ENCODE measurements at regions of chr15 and their contacts with region 1.

Region 1: GRCh38 chr15:68875377-68876116 is 54.8 kb upstream of the SPESP1 start:
- DNase-seq: peak; percentile 93
- H3K4me3 ChIP-seq: peak overlapping the region; percentile 41
- H3K27ac ChIP-seq: no peak overlapping the region
- H3K4me1 ChIP-seq: peaks cover 3% of the 10 kb centered on the region
- H3K27me3 ChIP-seq: no peaks in the 10 kb centered on the region
- CTCF ChIP-seq: peak; percentile 86

Region 2: DNA sequence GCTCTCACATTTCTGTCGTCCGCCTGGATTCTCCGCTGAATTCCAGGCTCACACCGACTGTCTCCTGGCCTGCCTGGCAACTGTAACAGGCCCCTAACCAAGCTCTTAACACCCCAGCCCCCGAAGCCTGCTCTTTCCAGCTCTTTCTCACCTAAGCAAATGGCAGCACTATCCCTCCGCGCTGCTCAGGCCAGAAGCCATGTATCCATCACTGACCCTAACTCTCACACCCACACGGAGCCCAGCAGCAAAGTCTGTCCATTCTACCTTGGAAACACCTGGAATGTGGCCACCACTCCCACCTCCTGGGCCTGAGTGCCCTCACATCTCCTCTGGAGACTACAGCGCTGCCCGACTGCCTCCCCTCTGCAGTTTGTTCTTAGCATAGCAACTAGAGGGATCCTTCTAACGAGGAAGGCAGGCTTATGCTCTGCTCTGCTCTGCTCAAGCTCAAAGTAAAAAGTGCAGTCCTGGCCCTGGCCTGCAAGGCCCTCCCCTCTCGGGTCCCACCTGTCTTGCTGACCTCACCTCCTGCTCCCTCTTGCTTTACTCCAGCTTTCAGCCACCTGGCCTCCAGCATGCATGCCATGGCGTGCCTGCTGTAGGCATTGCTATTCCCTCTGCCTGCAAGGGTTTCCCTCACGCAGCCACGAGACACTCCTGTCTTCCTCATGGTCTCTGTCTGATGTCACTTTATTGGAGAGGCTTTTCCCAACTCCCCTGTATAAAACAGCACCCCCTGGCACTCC is 570.8 kb before region 1 on chr15:
- CTCF ChIA-PET with region 1: interaction called, 6 read pairs
- POLR2A ChIA-PET with region 1: no interaction called
- intact Hi-C with region 1: loop called (anchors 5 kb)
- DNase-seq: no peak
- H3K4me3 ChIP-seq: no peak overlapping the region
- H3K27ac ChIP-seq: no peak overlapping the region
- H3K4me1 ChIP-seq: no peaks in the 10 kb centered on the region
- H3K27me3 ChIP-seq: no peaks in the 10 kb centered on the region
- CTCF ChIP-seq: no peak

Region 3: DNA sequence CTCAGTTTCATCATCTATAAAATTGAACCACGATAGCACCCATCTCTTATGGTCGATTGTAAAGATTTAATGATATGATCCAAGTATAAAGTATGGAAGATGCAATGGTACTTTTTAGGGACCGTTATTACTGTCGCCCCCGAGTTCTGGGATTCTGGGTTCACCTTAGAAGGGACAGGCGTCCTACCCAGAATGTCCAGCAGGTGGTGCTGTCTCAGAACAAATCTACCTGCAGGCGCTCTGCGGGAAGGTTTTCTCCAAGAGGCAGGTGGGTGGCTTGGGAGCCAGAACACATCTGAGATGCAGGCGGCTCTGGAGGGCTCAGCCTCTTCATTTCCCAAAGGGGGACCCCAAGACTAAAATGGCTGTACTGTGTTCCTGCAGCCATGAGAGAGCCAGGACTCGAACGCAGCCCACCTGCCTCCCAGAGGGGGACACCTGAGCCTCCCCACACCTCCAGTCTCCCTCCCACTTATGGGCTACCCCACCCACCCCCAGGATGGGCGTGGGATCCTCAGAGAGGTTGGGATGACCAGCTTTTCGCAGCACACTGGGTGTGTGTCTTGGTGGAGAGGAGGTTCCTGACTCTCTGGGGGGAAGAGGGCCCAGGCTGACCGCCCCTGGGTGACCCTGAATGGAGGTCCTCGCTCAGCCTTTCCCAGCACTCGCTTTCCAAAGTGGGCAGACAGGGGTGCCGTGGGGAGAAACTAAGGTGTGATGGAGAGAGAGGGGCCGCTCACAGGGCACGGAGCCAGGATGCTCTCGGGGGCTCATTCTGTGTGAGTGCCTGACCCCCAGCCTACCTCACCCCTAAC is 324.9 kb before region 1 on chr15:
- CTCF ChIA-PET with region 1: interaction called, 18 read pairs
- POLR2A ChIA-PET with region 1: no interaction called
- intact Hi-C with region 1: loop called (anchors 2 kb)
- DNase-seq: peak; percentile 62
- H3K4me3 ChIP-seq: no peak overlapping the region
- H3K27ac ChIP-seq: no peak overlapping the region
- H3K4me1 ChIP-seq: no peaks in the 10 kb centered on the region
- H3K27me3 ChIP-seq: peaks cover 4% of the 10 kb centered on the region
- CTCF ChIP-seq: peak; percentile 95

Region 4: GRCh38 chr15:68700455-68701123 is 175.0 kb before region 1 on chr15:
- CTCF ChIA-PET with region 1: interaction called, 10 read pairs
- POLR2A ChIA-PET with region 1: no interaction called
- intact Hi-C with region 1: no loop called
- DNase-seq: peak; percentile 87
- H3K4me3 ChIP-seq: peak overlapping the region; percentile 6
- H3K27ac ChIP-seq: peak overlapping the region; percentile 69
- H3K4me1 ChIP-seq: peaks cover 18% of the 10 kb centered on the region
- H3K27me3 ChIP-seq: no peaks in the 10 kb centered on the region
- CTCF ChIP-seq: no peak

Region 5: DNA sequence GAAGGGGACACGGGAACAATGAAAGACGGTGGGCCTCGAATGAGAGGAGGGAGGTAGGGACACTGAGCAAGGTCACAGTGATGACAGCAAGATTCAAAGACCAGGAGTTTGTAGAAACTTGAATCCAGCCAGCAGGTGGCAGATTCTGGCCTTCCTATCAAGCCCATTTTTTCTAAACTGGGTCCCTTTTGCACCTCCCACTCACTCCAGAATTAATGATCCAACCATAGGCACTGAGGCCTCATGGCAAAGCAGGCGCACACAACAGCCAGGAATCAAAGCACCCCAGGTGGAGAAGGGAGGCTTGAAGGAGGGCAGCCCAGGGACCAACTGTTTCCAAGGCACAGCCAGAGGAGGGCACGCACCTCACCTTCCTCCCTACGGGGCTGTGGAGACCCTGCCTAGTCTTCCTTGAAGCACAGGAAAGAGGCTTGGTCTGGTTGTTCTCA is 145.1 kb before region 1 on chr15:
- CTCF ChIA-PET with region 1: interaction called, 10 read pairs
- POLR2A ChIA-PET with region 1: no interaction called
- intact Hi-C with region 1: loop called (anchors 1 kb)
- DNase-seq: peak; percentile 78
- H3K4me3 ChIP-seq: no peak overlapping the region
- H3K27ac ChIP-seq: no peak overlapping the region
- H3K4me1 ChIP-seq: peaks cover 9% of the 10 kb centered on the region
- H3K27me3 ChIP-seq: no peaks in the 10 kb centered on the region
- CTCF ChIP-seq: peak; percentile 67

Region 6: DNA sequence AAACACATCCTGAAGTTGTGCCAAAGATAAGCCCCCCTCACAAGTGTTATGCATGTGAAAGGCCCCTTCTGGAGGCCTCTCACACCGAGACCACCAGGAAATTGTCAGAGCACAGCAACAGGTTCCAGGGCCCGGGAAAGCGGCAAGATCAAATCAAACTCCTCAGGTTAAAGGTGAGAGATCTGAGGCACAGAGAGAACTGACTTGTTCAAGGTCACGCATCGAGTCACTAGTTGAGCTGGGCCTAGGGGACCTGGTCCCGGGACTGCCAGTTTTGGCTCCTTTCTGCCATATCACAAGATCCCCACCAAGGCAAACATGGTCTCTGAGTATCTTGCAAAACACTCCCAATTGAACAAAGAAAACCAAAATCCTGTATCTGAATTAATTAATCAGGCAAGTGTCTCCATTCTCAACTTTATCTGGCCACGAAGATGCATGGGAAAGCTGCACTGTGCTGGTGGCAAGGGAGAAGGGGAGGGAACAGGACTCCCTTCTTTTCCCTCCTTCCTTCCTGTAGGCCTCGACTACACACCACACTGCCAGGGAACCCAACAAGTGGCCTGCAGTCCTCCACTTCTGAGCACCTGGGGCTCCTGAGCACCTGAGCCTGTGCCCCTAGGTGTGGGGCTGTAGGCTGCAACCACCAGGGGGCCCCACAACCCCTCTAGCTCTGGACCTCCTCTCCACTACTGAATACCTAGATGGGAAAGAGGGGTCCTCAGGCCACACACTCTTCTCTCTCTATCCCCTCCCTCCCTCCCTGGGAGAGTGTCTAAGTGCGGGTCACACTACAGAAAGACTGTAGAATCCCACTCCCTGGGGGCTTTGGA is 92.1 kb before region 1 on chr15:
- CTCF ChIA-PET with region 1: interaction called, 13 read pairs
- POLR2A ChIA-PET with region 1: no interaction called
- intact Hi-C with region 1: loop called (anchors 2 kb)
- DNase-seq: peak; percentile 27
- H3K4me3 ChIP-seq: no peak overlapping the region
- H3K27ac ChIP-seq: peak overlapping the region; percentile 45
- H3K4me1 ChIP-seq: peaks cover 10% of the 10 kb centered on the region
- H3K27me3 ChIP-seq: no peaks in the 10 kb centered on the region
- CTCF ChIP-seq: peak; percentile 67

Region 7: GRCh38 chr15:68924866-68925560 is 49.5 kb after region 1 on chr15:
- CTCF ChIA-PET with region 1: interaction called, 10 read pairs
- POLR2A ChIA-PET with region 1: no interaction called
- intact Hi-C with region 1: no loop called
- DNase-seq: peak; percentile 90
- H3K4me3 ChIP-seq: no peak overlapping the region
- H3K27ac ChIP-seq: no peak overlapping the region
- H3K4me1 ChIP-seq: no peaks in the 10 kb centered on the region
- H3K27me3 ChIP-seq: no peaks in the 10 kb centered on the region
- CTCF ChIP-seq: peak; percentile 97

Region 8: DNA sequence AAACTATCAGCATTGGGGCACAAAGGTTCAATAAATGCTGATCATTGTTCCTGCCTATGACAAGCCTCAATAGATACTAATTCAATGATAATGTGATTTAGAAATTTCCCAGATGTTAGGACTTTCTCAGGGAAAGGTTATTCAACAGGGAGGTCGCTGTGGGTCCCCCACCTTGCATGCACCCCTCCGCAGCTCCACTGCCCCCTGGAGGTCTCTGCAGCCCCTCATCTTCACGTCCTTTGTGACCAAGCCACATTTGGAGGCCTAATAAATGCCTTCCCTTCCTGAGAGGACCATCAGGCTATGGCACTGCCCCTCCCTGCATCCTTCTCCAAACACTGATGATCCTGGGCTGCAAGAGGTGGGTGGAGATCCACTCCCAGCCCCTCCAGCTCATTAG is 189.1 kb after region 1 on chr15:
- CTCF ChIA-PET with region 1: no interaction called
- POLR2A ChIA-PET with region 1: no interaction called
- intact Hi-C with region 1: no loop called
- DNase-seq: no peak
- H3K4me3 ChIP-seq: no peak overlapping the region
- H3K27ac ChIP-seq: no peak overlapping the region
- H3K4me1 ChIP-seq: peaks cover 36% of the 10 kb centered on the region
- H3K27me3 ChIP-seq: no peaks in the 10 kb centered on the region
- CTCF ChIP-seq: peak; percentile 41; the same call in 1 of the 2 replicates